Panc1 (cell line): ENCODE measurements at regions of chr6 and their contacts with region 1.

Region 1: GRCh38 chr6:111799576-111800258 is 73.5 kb downstream of the FYN start:
- DNase-seq: no peak
- ATAC-seq: peak; percentile 59
- H3K4me3 ChIP-seq: no peak overlapping the region
- H3K27ac ChIP-seq: no peak overlapping the region
- H3K4me1 ChIP-seq: no peaks in the 10 kb centered on the region
- H3K27me3 ChIP-seq: peaks cover 11% of the 10 kb centered on the region; the same call in 1 of the 2 replicates
- CTCF ChIP-seq: peak; percentile 43

Region 2: DNA sequence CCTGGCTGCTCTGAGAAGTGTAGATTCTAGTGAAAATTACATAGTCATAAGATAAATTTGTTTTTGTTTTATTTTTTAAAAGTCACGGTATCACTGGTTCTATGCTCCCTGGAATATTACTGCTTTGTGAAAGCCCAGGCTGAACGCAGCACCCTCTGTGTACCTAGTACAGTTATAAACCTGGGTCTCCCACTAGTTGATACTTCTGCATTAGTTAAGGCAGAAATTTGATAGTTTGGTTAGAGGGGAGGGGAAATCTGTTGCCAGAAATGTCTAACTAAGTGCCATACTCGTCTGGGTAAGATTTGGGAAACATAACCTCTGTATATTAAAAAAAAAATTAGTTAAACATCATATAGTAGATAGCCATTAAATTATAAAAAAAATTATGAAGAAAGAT is 83.4 kb before region 1 on chr6:
- CTCF ChIA-PET with region 1: no interaction called
- POLR2A ChIA-PET with region 1: interaction called, 11 read pairs
- in situ Hi-C with region 1: no loop called
- intact Hi-C with region 1: no loop called
- DNase-seq: no peak
- ATAC-seq: no peak
- H3K4me3 ChIP-seq: no peak overlapping the region
- H3K27ac ChIP-seq: no peak overlapping the region
- H3K4me1 ChIP-seq: no peaks in the 10 kb centered on the region
- H3K27me3 ChIP-seq: no peaks in the 10 kb centered on the region
- CTCF ChIP-seq: no peak